Transverse colon (tissue), 4 donors: ENCODE measurements at regions of chr18 and their contacts with region 1.

Region 1: GRCh38 chr18:22563098-22563707 is 145.5 kb upstream of the CTAGE1 start:
- DNase-seq: peak; percentile 35
- H3K4me3 ChIP-seq: no peak overlapping the region
- H3K27ac ChIP-seq: no peak overlapping the region
- H3K4me1 ChIP-seq: peaks cover 0 to 17% (median 14%) of the 10 kb centered on the region in 4 donors
- H3K27me3 ChIP-seq: peaks cover 10% of the 10 kb centered on the region
- CTCF ChIP-seq: peak; percentile 65 to 89 (median 72)
- EP300 ChIP-seq: no peak
- POLR2A ChIP-seq: no peak

Region 2: DNA sequence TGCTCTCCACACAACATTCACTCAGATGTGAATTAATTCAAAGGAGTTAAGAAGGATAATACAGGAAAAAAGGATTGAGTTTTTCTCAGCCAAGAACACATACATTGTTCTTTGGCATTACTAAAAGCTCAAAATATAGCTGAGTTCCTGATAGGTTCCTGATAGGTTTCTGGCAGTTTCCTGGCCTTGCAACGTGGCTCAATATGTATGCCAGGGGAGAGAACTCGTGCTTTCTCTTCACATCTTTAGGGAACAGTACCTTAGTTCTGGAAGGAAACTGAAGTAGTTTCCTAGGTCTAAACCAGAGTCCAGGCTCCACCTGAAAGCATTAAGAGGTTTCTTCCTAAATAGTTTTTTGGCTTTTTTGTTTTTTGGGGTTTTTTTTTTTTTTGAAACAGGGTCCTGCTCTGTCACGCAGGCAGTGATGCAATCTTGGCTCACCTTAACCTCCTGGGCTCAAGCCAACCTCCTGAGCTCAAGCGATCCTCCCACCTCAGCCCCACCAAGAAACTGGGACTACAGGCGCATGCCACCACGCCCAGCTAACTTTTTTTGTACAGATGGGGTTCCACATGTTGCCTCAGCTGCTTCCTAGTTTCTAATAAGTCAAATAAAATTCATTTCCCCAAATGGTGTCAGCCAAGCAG is 1005.5 kb before region 1 on chr18:
- in situ Hi-C with region 1: loop called in 1 of 4 experiments (anchors 25 kb)
- intact Hi-C with region 1: no loop called
- DNase-seq: no peak
- H3K4me3 ChIP-seq: no peak overlapping the region
- H3K27ac ChIP-seq: no peak overlapping the region
- H3K4me1 ChIP-seq: no peaks in the 10 kb centered on the region
- H3K27me3 ChIP-seq: no peaks in the 10 kb centered on the region
- CTCF ChIP-seq: no peak
- EP300 ChIP-seq: no peak
- POLR2A ChIP-seq: no peak

Region 3: DNA sequence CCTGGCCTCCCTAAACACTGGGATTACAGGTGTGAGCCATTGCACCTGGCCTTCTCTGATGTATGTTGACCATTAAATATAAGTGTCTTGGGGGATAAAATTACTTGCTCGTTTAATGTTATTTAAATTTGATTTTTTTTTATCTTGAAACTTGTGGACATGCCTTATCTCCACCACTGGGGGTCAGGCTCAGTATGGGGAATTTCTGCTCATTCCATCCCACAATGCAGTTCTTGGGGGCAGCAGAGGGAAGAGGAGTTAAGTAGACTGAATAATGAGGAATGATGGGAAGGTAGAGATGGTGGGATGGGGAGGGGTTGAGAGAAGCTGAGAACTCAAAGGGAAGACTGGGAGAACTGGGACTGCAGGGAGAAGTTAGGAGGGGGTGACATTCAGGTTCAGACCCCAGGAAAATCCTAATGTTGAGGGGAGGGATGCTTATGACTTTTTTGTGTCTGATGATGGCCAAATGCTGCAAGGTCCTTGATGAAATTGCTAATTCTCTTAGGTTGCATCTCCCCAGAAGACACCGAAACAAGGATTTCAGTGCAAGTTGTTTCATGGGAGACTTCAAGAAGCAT is 648.4 kb before region 1 on chr18:
- in situ Hi-C with region 1: loop called in 3 of 4 experiments (anchors 10 to 25 kb)
- intact Hi-C with region 1: no loop called
- DNase-seq: peak; percentile 19
- H3K4me3 ChIP-seq: no peak overlapping the region
- H3K27ac ChIP-seq: no peak overlapping the region
- H3K4me1 ChIP-seq: peaks cover 0 to 8% (median 0%) of the 10 kb centered on the region in 4 donors
- H3K27me3 ChIP-seq: no peaks in the 10 kb centered on the region
- CTCF ChIP-seq: peak; percentile 34 to 64 (median 50)
- EP300 ChIP-seq: no peak
- POLR2A ChIP-seq: no peak

Region 4: GRCh38 chr18:22185273-22185672 is 377.9 kb before region 1 on chr18:
- in situ Hi-C with region 1: loop called in 1 of 4 experiments (anchors 10 kb)
- intact Hi-C with region 1: no loop called
- DNase-seq: no peak
- H3K4me3 ChIP-seq: no peak overlapping the region
- H3K27ac ChIP-seq: peak overlapping the region; percentile 1 to 57 (median 32)
- H3K4me1 ChIP-seq: peaks cover 3 to 71% (median 49%) of the 10 kb centered on the region in 4 donors
- H3K27me3 ChIP-seq: peaks cover 12% of the 10 kb centered on the region
- CTCF ChIP-seq: no peak
- EP300 ChIP-seq: no peak
- POLR2A ChIP-seq: no peak

Region 5: GRCh38 chr18:22324191-22325131 is 238.7 kb before region 1 on chr18:
- in situ Hi-C with region 1: no loop called
- intact Hi-C with region 1: no loop called
- DNase-seq: peak; percentile 59
- H3K4me3 ChIP-seq: peak overlapping the region in 1 of 4 donors; percentile 0
- H3K27ac ChIP-seq: no peak overlapping the region
- H3K4me1 ChIP-seq: peaks cover 0 to 7% (median 3%) of the 10 kb centered on the region in 4 donors
- H3K27me3 ChIP-seq: no peaks in the 10 kb centered on the region
- CTCF ChIP-seq: peak in 1 of 5 experiments; percentile 7
- EP300 ChIP-seq: no peak
- POLR2A ChIP-seq: no peak

Region 6: DNA sequence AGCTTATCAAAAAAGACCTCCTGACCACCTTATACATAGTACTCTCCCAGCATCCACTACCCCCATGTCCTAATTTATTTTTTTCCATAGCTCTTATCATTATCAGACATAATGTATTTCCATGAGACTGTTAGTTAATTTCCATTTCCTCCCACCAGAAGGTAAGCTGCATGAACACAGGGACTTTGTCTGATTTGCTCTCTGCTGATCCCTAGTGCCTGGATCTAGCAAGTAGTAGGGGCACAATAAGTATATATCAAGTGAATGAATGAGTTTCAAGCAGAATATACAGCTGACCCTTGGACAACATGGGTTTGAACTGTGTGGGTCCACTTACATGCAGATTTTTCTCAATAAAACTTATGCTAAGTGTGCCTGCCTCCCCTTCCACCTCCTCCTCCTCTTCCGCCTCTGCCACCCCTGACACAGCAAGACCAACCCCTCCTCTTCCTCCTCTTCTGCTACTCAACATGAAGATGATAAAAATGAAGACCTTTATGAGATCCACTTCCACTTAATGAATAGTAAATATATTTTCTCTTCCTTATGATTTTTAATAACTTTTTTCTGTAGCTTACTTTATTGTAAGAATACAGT is 199.2 kb before region 1 on chr18:
- in situ Hi-C with region 1: loop called in 2 of 4 experiments (anchors 10 to 25 kb)
- intact Hi-C with region 1: no loop called
- DNase-seq: no peak
- H3K4me3 ChIP-seq: no peak overlapping the region
- H3K27ac ChIP-seq: no peak overlapping the region
- H3K4me1 ChIP-seq: no peaks in the 10 kb centered on the region
- H3K27me3 ChIP-seq: no peaks in the 10 kb centered on the region
- CTCF ChIP-seq: peak in 4 of 5 experiments; percentile 13 to 49 (median 31)
- EP300 ChIP-seq: no peak
- POLR2A ChIP-seq: no peak